Prostate gland (tissue), 2 donors: ENCODE measurements at regions of chr3 and their contacts with region 1.

Region 1: DNA sequence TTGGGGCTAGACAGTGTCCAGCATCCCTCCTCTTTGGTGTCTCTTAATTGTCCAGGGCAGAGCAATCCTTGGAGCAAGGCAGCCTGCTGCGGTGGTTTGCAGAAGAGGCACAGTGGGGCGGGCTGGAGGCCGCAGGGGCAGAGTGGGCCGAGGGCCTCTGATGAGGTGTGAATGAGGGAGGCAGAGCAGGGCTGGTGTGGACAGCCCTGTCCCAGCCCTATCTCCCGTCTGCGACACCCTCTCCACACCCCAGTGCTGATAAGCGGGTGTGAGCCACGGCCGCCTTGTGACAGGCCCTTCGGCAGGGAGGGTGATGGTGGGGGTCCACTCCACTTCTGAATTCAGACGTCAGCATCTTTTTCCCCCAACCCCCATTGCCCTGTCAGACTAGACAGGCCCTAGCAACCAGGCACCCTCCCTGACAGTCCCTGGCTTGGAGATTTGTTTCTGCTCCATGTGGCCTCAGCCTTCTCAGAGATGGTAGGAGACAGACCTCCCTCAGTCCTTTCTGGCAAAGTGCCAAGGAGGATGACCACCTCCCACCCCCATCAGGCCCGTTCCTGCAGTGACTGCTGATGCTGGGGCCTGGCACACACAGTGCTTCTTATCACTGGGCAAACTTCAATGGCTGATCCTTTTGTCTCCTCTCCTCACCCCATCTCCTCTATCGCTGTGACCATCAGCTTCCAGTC is 37.3 kb downstream of the EXOG start:
- DNase-seq: no peak
- H3K4me3 ChIP-seq: no peak overlapping the region
- H3K27ac ChIP-seq: no peak overlapping the region
- H3K4me1 ChIP-seq: no peaks in the 10 kb centered on the region
- H3K27me3 ChIP-seq: no peaks in the 10 kb centered on the region
- CTCF ChIP-seq: no peak
- POLR2A ChIP-seq: no peak

Region 2: DNA sequence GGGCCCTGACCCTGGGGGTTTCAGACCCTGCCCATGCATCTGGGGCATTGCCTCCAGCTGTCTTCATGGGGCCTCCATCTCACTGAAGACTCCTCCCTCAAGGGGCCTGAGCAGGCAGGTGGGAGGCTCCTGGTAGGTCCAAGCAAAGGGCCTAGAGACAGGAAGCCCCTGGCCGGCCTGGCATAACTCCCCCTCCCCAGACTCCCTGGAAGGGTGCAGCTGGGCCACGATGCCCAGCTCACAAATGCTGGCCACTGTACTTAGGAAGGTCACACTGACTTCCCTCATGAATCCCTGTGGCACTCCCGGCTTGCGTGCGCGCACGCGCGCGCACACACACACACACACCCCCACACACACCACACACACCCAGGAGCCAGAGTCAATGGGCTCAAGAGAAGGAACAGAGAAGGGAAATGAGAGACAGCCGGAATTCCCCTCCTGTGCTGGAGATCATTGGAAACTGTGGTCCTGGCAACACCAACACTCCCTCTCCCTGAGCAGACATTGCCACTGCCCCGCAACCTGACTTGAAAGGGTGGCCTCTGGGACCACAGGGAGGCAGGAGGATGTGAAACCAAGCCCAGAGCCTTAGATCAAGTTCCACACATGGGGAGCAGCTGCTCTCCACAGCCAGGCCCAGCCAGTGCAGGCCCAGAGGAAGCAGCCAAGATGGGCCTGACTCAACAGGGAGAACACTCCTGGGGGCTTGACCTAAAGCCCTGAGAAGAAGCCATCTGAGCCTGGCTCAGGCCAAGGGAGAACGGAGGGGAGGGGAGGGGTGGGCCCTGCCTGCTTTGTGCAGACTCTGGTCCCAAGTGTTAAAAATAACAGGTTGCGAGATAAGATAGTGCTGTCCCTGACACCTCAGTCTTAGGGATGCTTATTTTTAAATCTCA is 46.4 kb after region 1 on chr3:
- intact Hi-C with region 1: no loop called
- DNase-seq: no peak
- H3K4me3 ChIP-seq: no peak overlapping the region
- H3K27ac ChIP-seq: no peak overlapping the region
- H3K4me1 ChIP-seq: no peaks in the 10 kb centered on the region
- H3K27me3 ChIP-seq: no peaks in the 10 kb centered on the region
- CTCF ChIP-seq: no peak
- POLR2A ChIP-seq: no peak

Region 3: DNA sequence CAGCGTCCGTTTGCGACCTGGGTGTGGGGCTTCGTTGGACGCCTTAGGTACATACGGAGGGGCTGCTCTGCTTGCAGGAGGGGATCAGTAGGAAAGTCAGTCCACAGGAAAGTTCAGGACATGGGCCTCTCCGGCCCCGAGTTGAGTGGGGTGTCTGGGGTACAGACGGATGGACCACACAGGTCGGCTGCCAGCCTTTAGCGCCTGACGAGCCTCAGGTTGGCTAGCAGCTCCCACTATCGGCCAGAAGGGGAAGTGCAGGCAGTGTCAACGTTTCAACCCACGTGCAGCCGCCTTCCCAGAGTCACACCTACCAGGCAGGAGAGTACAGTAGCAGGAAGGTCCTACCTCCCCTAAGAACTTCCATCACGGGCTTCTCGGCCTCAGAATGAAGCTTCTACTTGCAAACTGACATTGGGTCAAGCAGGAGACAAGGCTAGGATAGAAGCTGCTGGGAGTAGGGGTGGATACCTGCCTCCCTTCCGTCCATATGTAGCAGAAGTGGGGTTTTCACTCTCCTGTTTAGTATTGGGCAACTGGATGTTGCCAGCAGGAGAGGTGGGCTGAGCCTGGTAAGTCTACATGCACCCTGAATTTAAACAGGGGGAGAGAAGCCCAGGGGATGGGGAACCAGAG is 117.8 kb after region 1 on chr3:
- intact Hi-C with region 1: loop called (anchors 5 kb)
- DNase-seq: peak; percentile 59
- H3K4me3 ChIP-seq: no peak overlapping the region
- H3K27ac ChIP-seq: no peak overlapping the region
- H3K4me1 ChIP-seq: no peaks in the 10 kb centered on the region
- H3K27me3 ChIP-seq: no peaks in the 10 kb centered on the region
- CTCF ChIP-seq: peak; percentile 83 to 90 (median 84)
- POLR2A ChIP-seq: no peak